ENCODE measurements at regions of chr20 and their contacts with region 1.

Region 1: DNA sequence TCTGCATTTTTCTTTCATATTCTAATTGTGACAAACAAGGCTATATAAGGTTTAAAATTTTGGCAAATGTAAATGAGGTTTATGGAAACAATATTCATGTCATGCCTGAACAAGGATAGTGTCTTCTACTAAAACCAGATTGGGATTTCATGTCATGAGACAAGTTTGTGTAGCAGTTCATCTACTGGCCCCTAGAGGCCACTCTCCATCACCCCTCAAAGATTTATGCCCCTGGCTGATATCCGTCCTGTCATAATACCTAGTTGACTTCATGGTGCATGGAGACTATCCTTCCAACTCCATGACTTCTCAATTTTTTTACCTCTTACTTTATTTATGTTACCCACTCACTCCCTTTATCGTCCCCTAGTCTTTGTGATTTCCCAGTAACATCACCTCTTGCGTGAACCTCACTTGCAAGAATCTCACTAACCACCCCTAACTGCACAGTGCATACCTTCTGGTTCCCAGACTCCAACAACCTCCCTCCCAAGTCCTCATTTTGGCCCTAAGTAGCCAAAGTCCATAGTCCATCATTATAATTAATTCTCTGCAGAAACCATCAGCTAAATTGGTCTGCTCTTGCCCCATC is 179.8 kb downstream of the TASP1 start:
- DNase-seq: peak; percentile 56
- H3K4me3 Mint-ChIP-seq: no peak overlapping the region
- H3K27ac Mint-ChIP-seq: no peak overlapping the region
- H3K4me1 Mint-ChIP-seq: peaks cover 8% of the 10 kb centered on the region
- H3K27me3 Mint-ChIP-seq: no peaks in the 10 kb centered on the region
- CTCF ChIP-seq: peak; percentile 81

Region 2: DNA sequence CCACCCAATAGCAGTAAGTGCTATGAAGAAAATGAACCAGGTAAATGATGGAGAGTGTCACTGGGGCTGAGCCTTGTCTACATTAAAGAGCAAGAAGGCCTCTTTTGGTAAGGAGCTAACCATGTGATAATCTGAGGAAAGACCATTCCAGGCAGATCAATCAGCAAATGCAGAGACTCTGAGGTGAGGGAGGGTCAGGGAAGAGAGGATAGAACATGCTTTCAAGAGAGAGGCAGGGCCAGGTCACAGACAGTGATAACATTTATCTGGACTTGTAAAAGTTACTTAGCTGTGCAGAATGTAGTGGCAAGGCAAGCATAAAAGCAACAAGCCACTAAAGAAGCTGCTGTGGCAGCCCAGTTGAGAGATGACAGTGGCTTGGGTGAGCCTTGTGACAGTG is 17.6 kb before region 1 on chr20:
- CTCF ChIA-PET with region 1: interaction called, 12 read pairs
- POLR2A ChIA-PET with region 1: no interaction called
- intact Hi-C with region 1: no loop called
- DNase-seq: no peak
- H3K4me3 Mint-ChIP-seq: no peak overlapping the region
- H3K27ac Mint-ChIP-seq: no peak overlapping the region
- H3K4me1 Mint-ChIP-seq: no peaks in the 10 kb centered on the region
- H3K27me3 Mint-ChIP-seq: no peaks in the 10 kb centered on the region
- CTCF ChIP-seq: no peak

Region 3: DNA sequence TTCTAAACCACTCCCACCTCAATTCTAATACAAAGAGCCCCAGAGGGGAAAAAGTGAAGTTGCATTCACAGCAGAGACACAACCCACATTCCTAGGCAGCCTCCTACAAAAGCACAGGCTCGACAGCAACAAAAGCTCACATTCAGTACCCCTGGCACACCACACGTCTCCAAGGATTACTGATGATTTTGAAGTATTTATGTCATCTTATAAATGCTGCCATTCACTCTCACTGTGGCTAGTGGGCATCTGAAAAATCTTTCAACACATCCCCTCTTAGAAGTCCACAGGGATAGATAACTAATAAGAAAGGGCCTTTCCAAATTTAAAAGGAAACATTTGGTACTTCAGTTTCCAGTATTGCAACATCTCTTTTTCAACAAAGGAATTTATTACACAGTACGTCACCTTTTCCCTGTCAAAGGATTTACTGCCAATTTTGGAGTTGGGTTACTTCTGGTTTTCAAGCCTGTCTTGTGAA is 33.1 kb after region 1 on chr20:
- CTCF ChIA-PET with region 1: interaction called, 10 read pairs
- POLR2A ChIA-PET with region 1: no interaction called
- intact Hi-C with region 1: no loop called
- DNase-seq: peak; percentile 77
- H3K4me3 Mint-ChIP-seq: peak overlapping the region; percentile 62
- H3K27ac Mint-ChIP-seq: peak overlapping the region; percentile 96
- H3K4me1 Mint-ChIP-seq: peaks cover 19% of the 10 kb centered on the region
- H3K27me3 Mint-ChIP-seq: no peaks in the 10 kb centered on the region
- CTCF ChIP-seq: no peak

Region 4: GRCh38 chr20:13533946-13534345 is 75.0 kb after region 1 on chr20:
- CTCF ChIA-PET with region 1: interaction called, 19 read pairs
- POLR2A ChIA-PET with region 1: no interaction called
- intact Hi-C with region 1: no loop called
- DNase-seq: no peak
- H3K4me3 Mint-ChIP-seq: no peak overlapping the region
- H3K27ac Mint-ChIP-seq: no peak overlapping the region
- H3K4me1 Mint-ChIP-seq: peaks cover 4% of the 10 kb centered on the region
- H3K27me3 Mint-ChIP-seq: no peaks in the 10 kb centered on the region
- CTCF ChIP-seq: no peak

Region 5: GRCh38 chr20:13671916-13672378 is 213.0 kb after region 1 on chr20:
- CTCF ChIA-PET with region 1: no interaction called
- POLR2A ChIA-PET with region 1: no interaction called
- intact Hi-C with region 1: no loop called
- DNase-seq: peak; percentile 31
- H3K4me3 Mint-ChIP-seq: no peak overlapping the region
- H3K27ac Mint-ChIP-seq: no peak overlapping the region
- H3K4me1 Mint-ChIP-seq: peaks cover 14% of the 10 kb centered on the region
- H3K27me3 Mint-ChIP-seq: no peaks in the 10 kb centered on the region
- CTCF ChIP-seq: no peak

Region 6: DNA sequence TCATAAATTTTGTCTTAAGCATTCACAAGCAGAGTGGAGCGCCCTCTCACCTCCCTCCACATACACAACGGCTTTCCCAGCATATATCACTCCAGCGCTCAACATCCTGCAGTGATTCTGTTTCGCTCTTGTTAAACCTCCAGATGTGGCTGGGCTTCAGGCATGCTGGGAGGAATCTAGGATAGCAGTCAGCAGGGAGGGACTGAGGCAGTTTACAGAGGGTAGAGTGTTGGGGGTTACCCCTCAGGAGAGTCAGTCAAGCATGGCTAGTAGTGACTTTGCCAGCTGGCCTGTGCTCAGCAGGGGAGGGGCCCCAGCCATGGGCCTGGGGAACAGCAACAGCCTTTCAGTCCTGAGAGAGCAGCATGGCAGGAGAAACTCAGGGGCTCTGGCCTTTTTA is 1039.8 kb after region 1 on chr20:
- CTCF ChIA-PET with region 1: no interaction called
- POLR2A ChIA-PET with region 1: no interaction called
- intact Hi-C with region 1: no loop called
- DNase-seq: no peak
- H3K4me3 Mint-ChIP-seq: no peak overlapping the region
- H3K27ac Mint-ChIP-seq: no peak overlapping the region
- H3K4me1 Mint-ChIP-seq: no peaks in the 10 kb centered on the region
- H3K27me3 Mint-ChIP-seq: no peaks in the 10 kb centered on the region
- CTCF ChIP-seq: no peak